ENCODE measurements at regions of chr10 and their contacts with region 1.

Region 1: GRCh38 chr10:126504063-126504739 is 115.9 kb upstream of the ADAM12 start:
- DNase-seq: peak; percentile 62

Region 2: DNA sequence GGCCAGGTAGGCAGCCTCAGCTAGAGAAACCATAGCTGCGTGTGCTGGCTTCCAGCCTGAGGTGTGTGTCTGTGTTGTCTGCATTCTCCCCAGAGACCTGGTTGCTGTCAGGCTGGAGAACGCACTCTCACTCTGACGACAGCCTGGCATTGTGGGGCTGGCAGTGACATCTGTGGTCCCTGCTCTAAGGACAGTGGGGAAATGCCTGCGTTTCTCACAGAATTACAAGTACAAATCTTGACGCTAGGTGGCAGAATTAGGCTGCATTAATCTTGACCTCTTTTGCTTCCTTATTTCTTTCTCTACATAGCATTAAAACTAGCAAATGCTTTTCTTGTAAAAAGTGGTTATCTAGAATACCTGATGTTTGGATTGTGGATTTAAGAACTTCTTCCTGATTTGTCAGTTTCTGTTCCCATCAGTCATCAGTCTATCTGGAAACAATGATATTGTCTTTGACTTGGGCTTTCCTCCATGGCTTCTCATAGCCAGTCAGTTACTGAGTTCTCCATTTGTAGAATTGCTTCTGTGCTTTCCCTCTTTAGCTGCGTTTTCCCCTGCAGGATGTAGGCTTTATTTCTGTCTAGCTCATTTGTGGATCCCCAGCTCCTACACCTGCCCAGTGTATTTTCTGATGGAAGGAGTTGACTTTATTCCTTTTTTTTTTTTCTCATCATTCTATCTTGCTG is 521.8 kb before region 1 on chr10:
- in situ Hi-C with region 1: loop called (anchors 25 kb)
- DNase-seq: peak; percentile 91